Natural killer cell (primary cell): ENCODE measurements at regions of chr9 and their contacts with region 1.

Region 1: DNA sequence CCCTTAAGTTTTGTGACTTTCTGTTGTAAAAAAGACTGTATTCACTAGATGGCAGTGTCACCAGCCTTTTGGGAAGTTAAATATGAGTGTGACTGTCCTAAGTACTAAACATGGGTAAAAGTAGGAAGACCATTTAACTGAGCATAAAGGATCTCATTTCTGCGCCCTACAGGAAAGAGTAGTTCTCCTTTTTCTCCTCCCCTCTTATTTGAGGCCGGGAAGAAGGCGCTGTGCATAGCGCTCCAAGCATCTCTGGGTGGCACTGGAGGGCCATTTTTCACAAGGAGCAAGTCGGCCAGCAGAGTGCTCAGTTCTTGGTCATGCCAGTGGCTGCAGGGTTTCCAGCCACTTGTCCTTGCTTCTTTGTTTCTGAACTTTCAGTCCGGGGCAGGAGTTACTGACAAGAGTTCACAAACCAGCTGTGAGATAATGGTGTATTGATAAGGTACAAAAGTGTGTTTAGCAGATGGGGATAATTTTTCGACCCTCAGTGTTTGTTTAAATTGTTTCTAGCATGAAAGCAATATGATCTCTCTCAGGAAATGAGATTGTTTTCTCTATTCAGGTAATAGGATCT is 227.6 kb upstream of the DMRT1 start:
- DNase-seq: peak; percentile 27 to 54
- ATAC-seq: peak; percentile 77 to 84 (median 78)
- H3K4me3 ChIP-seq: no peak overlapping the region
- H3K4me3 Mint-ChIP-seq: peak overlapping the region; percentile 42
- H3K27ac ChIP-seq: no peak overlapping the region
- H3K27ac Mint-ChIP-seq: no peak overlapping the region
- H3K4me1 ChIP-seq: peaks cover 3% of the 10 kb centered on the region
- H3K4me1 Mint-ChIP-seq: peaks cover 5 to 6% of the 10 kb centered on the region in 2 donors
- H3K27me3 ChIP-seq: no peaks in the 10 kb centered on the region
- H3K27me3 Mint-ChIP-seq: peaks cover 0 to 11% of the 10 kb centered on the region in 2 donors
- CTCF ChIP-seq: peak; percentile 96

Region 2: GRCh38 chr9:385818-386398 is 228.0 kb before region 1 on chr9:
- intact Hi-C with region 1: no loop called
- DNase-seq: peak in 1 of 2 donors; percentile 45
- ATAC-seq: peak; percentile 53 to 66 (median 63)
- H3K4me3 ChIP-seq: no peak overlapping the region
- H3K4me3 Mint-ChIP-seq: no peak overlapping the region
- H3K27ac ChIP-seq: no peak overlapping the region
- H3K27ac Mint-ChIP-seq: no peak overlapping the region
- H3K4me1 ChIP-seq: no peaks in the 10 kb centered on the region
- H3K4me1 Mint-ChIP-seq: no peaks in the 10 kb centered on the region
- H3K27me3 ChIP-seq: no peaks in the 10 kb centered on the region
- H3K27me3 Mint-ChIP-seq: no peaks in the 10 kb centered on the region
- CTCF ChIP-seq: no peak

Region 3: DNA sequence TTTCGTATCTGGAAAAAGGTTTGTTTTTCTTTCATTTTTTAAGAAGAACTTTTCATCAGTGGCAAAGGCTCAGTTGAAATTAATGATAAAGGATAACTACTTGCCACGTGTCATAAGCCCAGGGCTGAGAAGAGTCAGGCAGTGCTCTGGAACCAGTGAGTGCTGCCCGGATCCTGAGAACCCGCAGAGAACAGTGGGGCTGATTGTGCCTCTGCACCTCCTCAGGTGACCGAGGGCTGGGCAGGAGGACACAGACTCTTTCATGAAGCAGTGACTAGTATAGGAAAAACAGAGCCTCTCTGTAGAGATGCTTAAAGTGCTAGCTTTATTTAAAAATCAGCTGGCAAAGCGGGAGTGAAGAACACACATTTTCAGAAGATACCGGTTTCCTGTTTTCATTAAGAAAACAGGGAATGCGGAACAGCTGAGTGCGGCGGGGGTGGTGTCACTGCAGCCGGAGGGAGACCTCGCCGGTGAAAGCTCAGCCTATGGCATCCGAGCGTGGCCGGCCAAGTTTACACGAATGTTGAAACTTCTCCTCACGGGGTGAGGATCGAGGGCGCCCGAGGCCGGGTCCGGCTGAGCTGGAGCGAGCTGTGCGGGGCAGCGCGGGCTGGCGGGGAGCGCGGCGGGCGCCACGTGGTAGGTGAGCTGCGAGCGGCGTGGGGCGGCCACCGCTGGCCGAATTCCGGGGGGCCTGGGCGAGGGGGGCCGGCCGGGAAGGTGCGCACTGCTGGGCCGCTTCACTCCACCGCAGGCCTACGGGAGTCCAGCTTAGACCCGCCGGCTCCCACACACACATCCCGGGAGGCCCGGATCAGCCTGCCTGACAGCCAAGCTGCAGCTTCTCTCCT is 93.0 kb after region 1 on chr9:
- intact Hi-C with region 1: loop called (anchors 10 kb)
- DNase-seq: peak in 1 of 2 donors; percentile 34
- ATAC-seq: peak; percentile 53 to 79 (median 65)
- H3K4me3 ChIP-seq: peak overlapping the region; percentile 40
- H3K4me3 Mint-ChIP-seq: peak overlapping the region; percentile 96
- H3K27ac ChIP-seq: no peak overlapping the region
- H3K27ac Mint-ChIP-seq: peak overlapping the region in 1 of 2 donors; percentile 66
- H3K4me1 ChIP-seq: peaks cover 9% of the 10 kb centered on the region
- H3K4me1 Mint-ChIP-seq: peaks cover 13% of the 10 kb centered on the region in 2 donors
- H3K27me3 ChIP-seq: peaks cover 3% of the 10 kb centered on the region
- H3K27me3 Mint-ChIP-seq: peaks cover 38 to 39% of the 10 kb centered on the region in 2 donors
- CTCF ChIP-seq: no peak

Region 4: GRCh38 chr9:720239-720881 is 106.5 kb after region 1 on chr9:
- intact Hi-C with region 1: no loop called
- DNase-seq: no peak
- ATAC-seq: no peak
- H3K4me3 ChIP-seq: no peak overlapping the region
- H3K4me3 Mint-ChIP-seq: no peak overlapping the region
- H3K27ac ChIP-seq: no peak overlapping the region
- H3K27ac Mint-ChIP-seq: no peak overlapping the region
- H3K4me1 ChIP-seq: no peaks in the 10 kb centered on the region
- H3K4me1 Mint-ChIP-seq: no peaks in the 10 kb centered on the region
- H3K27me3 ChIP-seq: no peaks in the 10 kb centered on the region
- H3K27me3 Mint-ChIP-seq: peaks cover 0 to 14% of the 10 kb centered on the region in 2 donors
- CTCF ChIP-seq: no peak

Region 5: DNA sequence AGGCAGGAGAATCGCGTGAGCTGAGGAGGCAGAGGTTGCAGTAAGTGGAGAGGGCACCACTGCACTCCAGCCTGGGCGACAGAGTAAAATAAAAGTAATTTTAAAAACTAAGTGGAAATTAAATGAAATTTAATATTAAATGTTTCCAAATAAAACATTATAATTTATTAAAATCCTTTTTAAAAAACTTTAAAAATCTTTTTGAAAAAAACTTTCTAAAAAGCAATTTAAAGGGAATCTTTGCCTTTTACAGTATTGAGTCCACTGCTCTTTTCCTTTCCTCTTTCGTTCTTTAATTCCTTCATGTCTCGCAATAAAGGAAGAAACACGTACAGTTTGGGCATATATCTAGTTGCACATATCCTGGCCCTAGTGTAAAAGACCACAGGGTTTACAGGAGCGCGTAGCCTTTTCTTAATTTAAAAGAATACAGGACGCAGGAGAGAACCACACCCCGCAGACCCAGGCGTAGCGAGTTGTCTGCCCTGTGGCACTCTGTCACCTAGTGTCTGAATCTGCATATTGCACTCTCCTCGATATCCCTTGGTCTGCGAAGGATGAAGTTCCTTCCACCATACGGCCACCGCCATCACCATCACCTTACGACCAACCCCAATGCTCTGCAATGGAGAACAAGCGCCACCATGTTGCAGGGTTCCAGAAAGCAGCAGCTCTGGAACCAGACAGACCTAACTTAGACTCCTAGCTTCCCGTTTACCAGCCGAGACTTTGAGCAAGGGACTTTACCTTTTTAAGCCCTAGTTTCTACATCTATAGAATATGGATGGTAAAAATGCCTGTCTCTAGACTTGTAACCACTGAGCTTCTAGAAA is 150.0 kb after region 1 on chr9:
- intact Hi-C with region 1: loop called (anchors 1 kb)
- DNase-seq: peak in 1 of 2 donors; percentile 58
- ATAC-seq: peak; percentile 76 to 92 (median 87)
- H3K4me3 ChIP-seq: no peak overlapping the region
- H3K4me3 Mint-ChIP-seq: no peak overlapping the region
- H3K27ac ChIP-seq: no peak overlapping the region
- H3K27ac Mint-ChIP-seq: no peak overlapping the region
- H3K4me1 ChIP-seq: no peaks in the 10 kb centered on the region
- H3K4me1 Mint-ChIP-seq: peaks cover 0 to 6% of the 10 kb centered on the region in 2 donors
- H3K27me3 ChIP-seq: peaks cover 2% of the 10 kb centered on the region
- H3K27me3 Mint-ChIP-seq: peaks cover 10 to 12% of the 10 kb centered on the region in 2 donors
- CTCF ChIP-seq: peak; percentile 46

Region 6: GRCh38 chr9:806285-807156 is 192.7 kb after region 1 on chr9:
- intact Hi-C with region 1: loop called (anchors 1 kb)
- DNase-seq: peak in 1 of 2 donors; percentile 51
- ATAC-seq: peak in 1 of 3 donors; percentile 57
- H3K4me3 ChIP-seq: no peak overlapping the region
- H3K4me3 Mint-ChIP-seq: no peak overlapping the region
- H3K27ac ChIP-seq: no peak overlapping the region
- H3K27ac Mint-ChIP-seq: no peak overlapping the region
- H3K4me1 ChIP-seq: no peaks in the 10 kb centered on the region
- H3K4me1 Mint-ChIP-seq: peaks cover 0 to 7% of the 10 kb centered on the region in 2 donors
- H3K27me3 ChIP-seq: no peaks in the 10 kb centered on the region
- H3K27me3 Mint-ChIP-seq: peaks cover 8 to 20% of the 10 kb centered on the region in 2 donors
- CTCF ChIP-seq: peak; percentile 55

Region 7: GRCh38 chr9:1009101-1009707 is 395.3 kb after region 1 on chr9:
- intact Hi-C with region 1: loop called (anchors 2 kb)
- DNase-seq: peak; percentile 60 to 78
- ATAC-seq: peak; percentile 92 to 98 (median 92)
- H3K4me3 ChIP-seq: no peak overlapping the region
- H3K4me3 Mint-ChIP-seq: no peak overlapping the region
- H3K27ac ChIP-seq: no peak overlapping the region
- H3K27ac Mint-ChIP-seq: no peak overlapping the region
- H3K4me1 ChIP-seq: peaks cover 3% of the 10 kb centered on the region
- H3K4me1 Mint-ChIP-seq: peaks cover 10 to 11% of the 10 kb centered on the region in 2 donors
- H3K27me3 ChIP-seq: no peaks in the 10 kb centered on the region
- H3K27me3 Mint-ChIP-seq: peaks cover 11 to 32% of the 10 kb centered on the region in 2 donors
- CTCF ChIP-seq: peak; percentile 89